Activated CD8-positive, alpha-beta T cell treated with anti-CD3 and anti-CD28 coated beads, Interleukin-2, amount 10 ng/mL, durations not matched to agents 7 days and 5 days (primary cell): ENCODE measurements at regions of chr19 and their contacts with region 1.

Region 1: DNA sequence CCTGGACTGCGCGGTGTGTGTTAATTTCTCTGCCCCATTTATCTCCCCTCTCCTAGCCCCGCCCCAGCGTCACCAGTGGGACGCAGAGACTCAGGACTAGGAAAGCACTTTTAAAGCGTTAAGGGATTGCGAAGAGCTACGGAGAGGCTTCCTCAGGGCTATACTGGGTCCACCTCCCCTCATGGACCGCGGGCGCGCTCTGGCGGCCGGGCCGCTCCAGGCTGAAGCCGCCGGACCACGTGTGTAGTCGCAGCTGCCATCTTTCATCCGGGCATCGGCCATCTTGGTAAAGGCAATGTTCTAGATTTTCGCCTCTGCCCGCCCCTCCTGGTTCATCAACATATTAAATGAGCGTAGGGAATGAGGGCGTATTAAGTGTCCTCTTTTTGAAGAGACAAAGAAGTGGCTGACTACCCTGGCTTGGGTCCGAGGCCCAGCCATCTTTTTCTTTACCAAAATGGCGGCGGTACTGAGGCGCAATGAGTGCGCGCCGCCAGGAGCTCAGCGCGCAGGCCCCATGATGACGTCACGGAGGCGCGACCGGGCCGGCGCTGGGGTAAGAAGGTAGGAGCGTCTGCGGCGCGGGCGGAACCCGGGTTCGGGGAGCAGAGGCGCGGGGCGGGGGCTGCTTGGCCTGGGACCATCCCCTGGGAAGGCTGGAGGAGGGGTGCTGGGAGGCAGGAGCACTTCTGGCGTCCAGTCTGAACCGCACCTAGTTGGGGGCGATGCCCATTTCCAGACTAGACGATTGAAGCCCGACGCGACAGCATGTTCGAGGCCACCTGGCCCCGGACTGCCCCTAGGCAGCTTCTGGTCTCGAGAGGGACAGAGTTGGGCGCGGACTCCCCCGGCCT is at the start of gene CCDC124:
- DNase-seq: peak; percentile 95
- ATAC-seq: peak; percentile 99
- H3K4me3 Mint-ChIP-seq: peak within 1 kb of the TSS; percentile 83
- H3K27ac Mint-ChIP-seq: peak within 1 kb of the TSS; percentile 96
- H3K4me1 Mint-ChIP-seq: peaks cover 21% of the 10 kb centered on the region
- H3K27me3 Mint-ChIP-seq: peaks cover 2% of the 10 kb centered on the region
- total RNA-seq, gene CCDC124: 85.8 to 88.0 TPM

Region 2: DNA sequence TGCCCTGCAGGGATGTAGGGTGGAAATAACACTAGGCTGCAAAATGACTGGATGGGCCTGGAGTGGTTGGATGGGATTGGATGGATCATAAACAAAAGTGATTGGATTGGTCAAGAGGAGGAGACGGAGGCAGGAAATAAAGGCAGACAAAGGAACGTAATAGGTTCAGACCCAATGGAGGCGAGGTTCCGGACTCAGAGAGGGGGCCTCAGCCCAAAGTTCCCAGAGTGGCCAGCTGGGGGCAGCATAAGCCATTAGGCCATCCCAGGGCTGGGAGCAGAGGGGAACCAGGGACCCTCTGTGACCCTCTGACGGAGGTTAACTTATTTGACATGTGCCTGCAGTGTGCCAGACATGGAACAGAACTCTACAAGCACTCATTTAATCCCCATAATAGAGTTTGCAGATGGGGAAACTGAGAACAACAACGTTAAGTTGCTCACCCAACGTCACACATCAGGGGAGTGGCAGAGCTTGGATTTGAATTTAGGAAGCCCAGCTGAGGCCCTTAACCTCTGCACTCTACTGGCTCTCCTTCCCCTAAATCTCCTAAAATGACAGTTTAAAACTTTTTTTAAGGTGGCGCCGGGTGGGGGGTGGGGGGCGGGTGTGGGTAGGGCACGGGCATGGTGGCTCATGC is 228.8 kb before region 1 on chr19:
- CTCF ChIA-PET with region 1: interaction called, 12 read pairs
- POLR2A ChIA-PET with region 1: no interaction called
- DNase-seq: peak; percentile 74
- ATAC-seq: peak; percentile 93
- H3K4me3 Mint-ChIP-seq: no peak overlapping the region
- H3K27ac Mint-ChIP-seq: no peak overlapping the region
- H3K4me1 Mint-ChIP-seq: no peaks in the 10 kb centered on the region
- H3K27me3 Mint-ChIP-seq: peaks cover 3% of the 10 kb centered on the region

Region 3: GRCh38 chr19:17847538-17848366 is 85.0 kb before region 1 on chr19 and contains the start of gene JAK3:
- CTCF ChIA-PET with region 1: interaction called, 20 read pairs
- POLR2A ChIA-PET with region 1: interaction called, 9 read pairs
- DNase-seq: peak; percentile 90
- ATAC-seq: peak; percentile 80
- H3K4me3 Mint-ChIP-seq: peak within 1 kb of the TSS; percentile 91
- H3K27ac Mint-ChIP-seq: peak within 1 kb of the TSS; percentile 96
- H3K4me1 Mint-ChIP-seq: peaks cover 75% of the 10 kb centered on the region
- H3K27me3 Mint-ChIP-seq: no peaks in the 10 kb centered on the region
- total RNA-seq, gene JAK3: 125 to 127 TPM

Region 4: DNA sequence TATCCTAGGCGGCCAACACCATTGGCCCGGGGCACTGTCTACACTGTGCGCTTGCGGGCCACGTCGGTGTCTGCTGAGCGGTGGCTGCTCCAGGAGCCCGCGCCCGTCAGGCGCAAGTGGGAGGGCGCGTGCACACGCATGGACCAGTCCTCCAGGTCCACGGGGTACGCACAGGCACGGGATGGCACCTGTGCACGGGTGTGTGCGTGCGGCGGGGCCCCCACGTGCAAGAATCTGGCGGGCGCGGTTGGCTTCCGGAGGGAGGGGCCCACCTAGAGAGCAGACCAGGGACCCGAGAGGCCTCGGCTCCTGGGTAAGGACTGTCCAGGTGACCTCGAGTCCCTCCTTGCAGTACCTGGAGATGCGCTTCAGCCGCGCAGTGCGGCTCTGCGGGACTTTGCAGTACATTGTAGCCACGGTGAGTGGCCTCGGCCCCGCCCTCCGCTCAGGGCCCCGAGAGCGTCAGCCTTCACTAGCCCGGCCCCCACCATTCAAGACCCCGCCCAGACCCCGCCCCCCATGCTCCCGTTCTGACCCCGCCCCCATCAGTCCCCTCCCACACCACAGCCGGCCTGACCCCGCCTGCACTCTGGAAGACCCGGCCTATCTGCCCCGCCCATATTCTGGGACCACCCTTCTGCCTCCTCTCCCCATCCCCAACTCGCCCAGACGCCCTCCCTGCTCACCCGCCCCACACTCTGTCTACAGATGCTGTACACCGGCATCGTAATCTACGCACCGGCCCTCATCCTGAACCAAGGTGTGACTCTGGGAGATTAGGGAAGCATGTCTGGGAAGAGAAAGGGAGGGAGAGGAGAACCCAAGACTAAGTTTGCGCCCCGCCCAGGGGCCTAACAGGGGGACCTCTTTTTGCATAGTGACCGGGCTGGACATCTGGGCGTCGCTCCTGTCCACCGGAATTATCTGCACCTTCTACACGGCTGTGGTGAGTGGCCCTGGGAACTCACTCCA is 58.6 kb before region 1 on chr19:
- CTCF ChIA-PET with region 1: interaction called, 62 read pairs
- POLR2A ChIA-PET with region 1: interaction called, 11 read pairs
- DNase-seq: peak; percentile 79
- ATAC-seq: peak; percentile 72
- H3K4me3 Mint-ChIP-seq: peak overlapping the region; percentile 86
- H3K27ac Mint-ChIP-seq: peak overlapping the region; percentile 74
- H3K4me1 Mint-ChIP-seq: peaks cover 34% of the 10 kb centered on the region
- H3K27me3 Mint-ChIP-seq: no peaks in the 10 kb centered on the region

Region 5: DNA sequence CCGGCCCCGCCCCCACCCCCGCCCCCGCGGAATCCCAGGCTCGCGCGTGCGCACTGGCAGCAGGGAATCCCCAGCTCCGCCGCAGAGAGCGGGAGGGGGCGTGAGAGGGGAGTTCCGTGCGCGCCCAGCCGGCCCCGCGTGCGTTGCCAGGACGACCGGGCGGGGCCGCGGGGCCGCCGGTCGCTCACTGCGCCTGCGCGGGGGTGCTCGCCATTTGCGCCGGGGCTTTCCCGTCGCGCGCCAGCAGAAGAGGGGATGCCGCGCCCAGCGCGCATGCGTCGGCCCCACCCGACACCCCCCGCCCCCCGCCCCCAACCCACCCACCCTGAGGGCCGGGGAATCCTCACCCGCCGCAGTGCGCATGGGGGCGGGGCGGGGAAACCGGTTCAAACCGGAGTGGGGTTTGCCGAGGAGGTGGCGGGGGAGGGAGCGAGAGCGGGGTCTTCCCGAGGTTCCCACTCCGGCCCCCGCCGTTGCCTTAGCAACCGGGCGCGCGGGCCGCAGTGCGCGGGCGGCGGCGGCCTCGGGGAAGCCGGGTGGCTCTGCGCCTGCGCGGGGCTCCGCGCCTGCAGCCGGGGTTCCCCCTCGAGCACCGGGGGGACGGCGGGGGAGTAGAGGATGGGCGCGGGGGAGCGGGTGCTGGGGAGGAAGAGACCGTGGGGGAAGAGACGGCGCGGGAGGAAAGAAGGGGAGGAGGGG is 15.3 kb after region 1 on chr19:
- CTCF ChIA-PET with region 1: interaction called, 21 read pairs
- POLR2A ChIA-PET with region 1: interaction called, 4 read pairs
- DNase-seq: peak; percentile 95
- ATAC-seq: peak; percentile 70
- H3K4me3 Mint-ChIP-seq: peak overlapping the region; percentile 70
- H3K27ac Mint-ChIP-seq: no peak overlapping the region
- H3K4me1 Mint-ChIP-seq: peaks cover 41% of the 10 kb centered on the region
- H3K27me3 Mint-ChIP-seq: peaks cover 36% of the 10 kb centered on the region

Region 6: DNA sequence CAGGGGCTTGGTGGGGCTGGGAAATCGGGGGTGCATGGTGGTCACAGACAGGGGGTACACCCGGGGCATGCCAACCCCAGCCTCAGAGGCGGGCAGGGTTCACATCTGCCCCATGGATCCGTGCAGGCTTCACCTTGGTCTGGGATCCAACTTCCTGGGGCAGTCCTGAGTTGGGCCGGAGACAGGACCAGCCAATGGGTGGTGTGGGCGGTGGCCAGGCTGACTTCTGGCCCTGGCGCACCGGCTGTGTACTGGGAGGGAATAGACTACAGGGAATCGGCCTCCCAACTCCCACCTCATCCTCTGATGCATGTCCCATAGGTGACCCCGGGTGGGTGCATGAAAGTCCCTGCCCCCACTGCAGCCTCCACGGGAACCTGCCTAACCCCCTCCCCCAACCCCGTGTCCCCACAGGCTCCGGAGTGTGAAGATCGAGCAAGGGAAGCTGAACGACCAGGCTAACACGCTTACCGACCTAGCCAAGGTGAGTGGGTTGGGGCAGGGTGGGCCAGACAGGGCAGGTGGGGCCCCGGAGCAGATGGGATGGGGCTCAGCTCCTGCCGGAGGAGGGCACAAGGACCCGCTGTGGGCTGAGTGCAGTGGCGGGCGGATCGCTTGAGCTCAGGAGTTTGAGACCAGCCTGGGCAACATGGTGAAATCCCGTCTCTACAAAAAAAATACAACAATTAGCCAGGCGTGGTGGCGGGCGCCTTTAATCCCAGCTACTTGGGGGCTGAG is 60.5 kb after region 1 on chr19:
- CTCF ChIA-PET with region 1: interaction called, 141 read pairs
- POLR2A ChIA-PET with region 1: interaction called, 7 read pairs
- DNase-seq: no peak
- ATAC-seq: no peak
- H3K4me3 Mint-ChIP-seq: no peak overlapping the region
- H3K27ac Mint-ChIP-seq: no peak overlapping the region
- H3K4me1 Mint-ChIP-seq: peaks cover 5% of the 10 kb centered on the region
- H3K27me3 Mint-ChIP-seq: peaks cover 2% of the 10 kb centered on the region

Region 7: DNA sequence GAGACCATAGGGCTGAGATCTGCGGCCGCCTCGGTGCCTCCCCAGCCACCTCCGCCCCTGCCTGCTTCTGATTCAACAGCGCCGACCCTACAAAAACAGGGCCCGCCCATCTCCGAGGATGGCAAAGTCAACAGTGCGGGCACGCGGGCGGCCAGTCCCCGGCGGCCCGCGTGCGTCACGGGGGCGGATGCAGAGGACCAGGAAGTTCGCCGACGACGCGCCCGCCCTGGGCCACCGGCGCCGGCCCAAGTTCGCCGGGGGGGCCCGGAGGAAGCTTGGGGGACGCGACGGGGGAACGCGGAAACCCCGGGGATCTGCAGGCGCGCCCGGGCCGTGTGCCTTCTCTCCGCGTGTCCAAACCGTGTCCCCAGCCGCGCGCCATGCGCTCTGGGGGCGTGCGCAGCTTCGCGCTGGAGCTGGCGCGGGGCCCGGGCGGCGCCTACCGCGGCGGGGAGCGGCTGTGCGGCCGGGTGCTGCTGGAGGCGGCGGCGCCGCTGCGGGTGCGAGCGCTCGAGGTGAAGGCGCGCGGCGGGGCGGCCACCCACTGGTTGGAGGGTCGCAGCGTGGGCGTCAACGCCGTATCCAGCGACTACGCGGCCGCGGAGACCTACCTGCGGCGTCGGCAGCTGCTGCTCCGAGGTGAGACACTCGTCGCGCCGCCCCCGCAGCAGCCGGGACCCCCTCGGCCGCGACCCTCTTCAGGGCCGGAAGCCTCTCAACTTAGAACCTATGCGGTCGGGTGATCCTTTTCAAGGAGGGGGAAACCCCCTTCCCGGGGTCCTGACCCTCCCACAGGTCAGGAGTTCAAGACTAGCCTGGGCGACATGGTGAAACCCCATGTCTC is 68.4 kb after region 1 on chr19:
- CTCF ChIA-PET with region 1: interaction called, 141 read pairs
- POLR2A ChIA-PET with region 1: interaction called, 7 read pairs
- DNase-seq: peak; percentile 94
- ATAC-seq: peak; percentile 84
- H3K4me3 Mint-ChIP-seq: peak overlapping the region; percentile 92
- H3K27ac Mint-ChIP-seq: peak overlapping the region; percentile 100
- H3K4me1 Mint-ChIP-seq: peaks cover 31% of the 10 kb centered on the region
- H3K27me3 Mint-ChIP-seq: no peaks in the 10 kb centered on the region

Region 8: GRCh38 chr19:18074190-18074589 is 141.5 kb after region 1 on chr19:
- CTCF ChIA-PET with region 1: no interaction called
- POLR2A ChIA-PET with region 1: no interaction called
- DNase-seq: no peak
- ATAC-seq: no peak
- H3K4me3 Mint-ChIP-seq: no peak overlapping the region
- H3K27ac Mint-ChIP-seq: peak overlapping the region; percentile 74
- H3K4me1 Mint-ChIP-seq: peaks cover 18% of the 10 kb centered on the region
- H3K27me3 Mint-ChIP-seq: no peaks in the 10 kb centered on the region

Region 9: GRCh38 chr19:18257503-18258470 is 325.1 kb after region 1 on chr19:
- CTCF ChIA-PET with region 1: no interaction called
- POLR2A ChIA-PET with region 1: no interaction called
- DNase-seq: no peak
- ATAC-seq: no peak
- H3K4me3 Mint-ChIP-seq: no peak overlapping the region
- H3K27ac Mint-ChIP-seq: no peak overlapping the region
- H3K4me1 Mint-ChIP-seq: no peaks in the 10 kb centered on the region
- H3K27me3 Mint-ChIP-seq: peaks cover 16% of the 10 kb centered on the region